GM10248 (cell line): ENCODE measurements at regions of chr1 and their contacts with region 1.

Region 1: DNA sequence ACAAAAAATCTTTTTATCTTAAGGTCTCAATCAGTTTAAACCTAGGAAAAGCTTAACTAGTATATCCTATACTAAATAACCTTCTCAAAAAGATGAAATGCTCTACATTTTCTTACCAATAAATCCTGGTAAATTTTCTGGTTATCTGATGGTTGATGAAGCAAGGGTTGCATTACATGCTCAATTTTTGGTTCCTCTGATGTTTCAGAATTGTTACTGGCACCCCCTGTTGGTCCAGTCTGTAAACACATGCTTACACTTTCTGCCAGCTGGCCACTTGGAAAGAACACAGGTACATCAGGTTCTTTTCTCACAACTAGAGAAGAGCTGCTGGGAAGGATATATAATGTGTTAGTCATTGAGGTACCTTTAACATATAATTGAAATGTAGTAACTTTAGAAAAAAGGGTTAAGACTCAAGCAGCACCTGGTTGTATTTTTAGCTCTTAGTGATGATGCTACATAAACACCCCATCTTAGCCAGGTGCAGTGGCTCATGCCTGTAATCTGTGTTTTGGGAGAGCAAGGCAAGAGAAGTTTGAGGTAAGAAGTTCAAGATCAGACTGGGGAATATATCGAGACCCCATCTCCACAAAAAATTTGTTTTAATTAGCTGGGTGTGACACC is 30.9 kb upstream of the TAL1 start:
- DNase-seq: peak; percentile 53
- CTCF ChIP-seq: peak; percentile 59

Region 2: GRCh38 chr1:46983830-46984586 is 278.9 kb before region 1 on chr1:
- CTCF ChIA-PET with region 1: no interaction called
- POLR2A ChIA-PET with region 1: no interaction called
- DNase-seq: no peak
- CTCF ChIP-seq: no peak

Region 3: GRCh38 chr1:47179017-47179987 is 83.6 kb before region 1 on chr1:
- CTCF ChIA-PET with region 1: interaction called, 32 read pairs
- POLR2A ChIA-PET with region 1: no interaction called
- DNase-seq: peak; percentile 87
- CTCF ChIP-seq: peak; percentile 97

Region 4: DNA sequence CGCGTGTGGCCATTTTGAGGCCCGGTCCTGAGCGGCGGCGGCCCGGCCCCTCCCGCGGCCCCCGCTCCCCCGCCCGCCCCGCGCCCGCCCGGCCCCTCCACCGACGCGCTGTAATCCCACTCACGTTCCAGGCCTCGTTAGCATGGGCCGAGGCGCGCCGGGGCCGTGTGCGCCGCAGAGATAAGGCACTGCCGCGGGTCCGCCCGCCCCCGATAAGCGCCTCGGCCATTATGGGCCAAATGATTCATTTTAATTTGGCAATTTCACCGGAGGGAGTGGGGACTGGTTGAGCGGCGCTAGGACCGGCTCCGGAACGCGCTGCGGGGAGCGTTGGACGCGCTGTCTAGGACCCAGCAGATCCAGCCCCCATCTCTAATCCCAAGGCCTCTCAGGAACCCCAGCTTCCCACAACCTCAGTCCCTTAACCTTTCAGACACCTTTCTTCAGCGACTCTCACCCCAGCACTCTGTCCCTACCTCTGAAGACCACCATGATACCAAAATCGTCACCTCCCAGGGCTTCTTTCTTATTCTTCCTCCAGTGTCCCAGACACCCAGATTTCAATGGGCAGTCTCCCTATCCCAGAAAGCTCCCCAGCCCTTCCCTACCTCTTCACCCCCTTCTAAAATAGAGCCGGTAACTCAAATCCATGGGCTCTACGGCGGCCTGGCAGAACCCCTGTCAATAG is 30.6 kb before region 1 on chr1 and contains the start of gene TAL1:
- CTCF ChIA-PET with region 1: interaction called, 13 read pairs
- POLR2A ChIA-PET with region 1: no interaction called
- DNase-seq: no peak
- CTCF ChIP-seq: no peak

Region 5: DNA sequence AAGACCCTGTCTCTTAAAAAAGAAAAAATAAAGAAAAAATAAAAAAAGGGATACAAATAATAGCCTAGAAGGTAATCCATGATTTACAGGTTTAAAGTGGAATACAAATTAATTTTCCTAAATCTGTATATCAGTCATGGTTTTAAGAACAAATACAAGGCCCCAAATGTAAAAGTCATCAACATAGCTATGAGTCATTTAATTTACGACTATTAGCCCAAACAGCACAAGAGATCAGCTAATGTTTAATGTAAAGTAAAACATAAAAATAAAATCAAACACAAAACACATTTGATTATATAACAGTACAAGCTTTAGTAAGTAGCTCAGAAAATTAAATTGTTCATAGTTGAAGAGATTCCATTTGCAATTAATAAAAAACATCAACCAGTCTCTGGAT is 10.5 kb before region 1 on chr1:
- CTCF ChIA-PET with region 1: interaction called, 54 read pairs
- POLR2A ChIA-PET with region 1: no interaction called
- DNase-seq: no peak
- CTCF ChIP-seq: no peak

Region 6: DNA sequence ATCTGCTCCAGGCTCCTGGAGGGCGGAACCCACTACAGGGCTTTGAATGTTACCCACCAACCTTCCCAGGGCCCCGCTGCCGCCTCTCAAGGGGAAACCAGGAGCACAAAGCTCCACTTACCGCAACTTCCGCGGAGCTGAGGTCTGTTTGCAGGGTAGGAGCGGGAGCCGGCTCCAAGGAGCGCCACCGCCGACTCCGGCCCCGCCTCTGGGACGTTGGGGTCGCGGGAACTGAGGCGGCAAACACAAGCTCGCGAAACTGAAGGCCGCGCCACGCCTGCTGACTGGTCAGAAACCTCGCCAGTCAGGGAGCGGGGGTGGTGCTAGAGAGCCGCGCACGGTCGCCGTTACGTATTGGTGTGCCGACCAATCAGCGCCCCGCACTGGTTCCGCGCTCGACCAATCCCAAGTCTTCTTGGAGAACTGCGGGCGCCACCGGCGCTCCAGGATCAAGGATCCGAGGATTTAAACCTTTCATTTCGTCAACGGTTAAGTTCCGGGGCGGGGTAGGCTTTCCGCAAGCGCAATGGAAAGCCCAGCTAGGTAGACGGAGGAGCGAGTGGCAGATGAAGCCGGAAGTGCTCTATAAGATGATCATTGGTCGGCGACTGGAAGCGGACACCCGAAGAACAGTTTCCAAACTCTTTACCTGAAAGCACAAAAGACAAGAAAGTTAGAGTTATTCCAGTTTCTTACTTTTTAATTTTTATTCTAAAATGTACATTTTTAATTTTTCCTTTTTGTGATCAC is 51.2 kb after region 1 on chr1 and contains the start of gene STIL:
- CTCF ChIA-PET with region 1: interaction called, 11 read pairs
- POLR2A ChIA-PET with region 1: no interaction called
- DNase-seq: peak; percentile 98
- CTCF ChIP-seq: no peak